Naive thymus-derived CD4-positive, alpha-beta T cell (primary cell): ENCODE measurements at regions of chr13 and their contacts with region 1.

Region 1: GRCh38 chr13:48265217-48265815 is 32.3 kb downstream of the ITM2B start:
- DNase-seq: peak in 3 of 9 donors; percentile 17 to 38 (median 27)
- ATAC-seq: peak; percentile 48
- H3K4me3 ChIP-seq: no peak overlapping the region
- H3K4me3 Mint-ChIP-seq: peak overlapping the region in 9 of 10 donors; percentile 15 to 72 (median 54)
- H3K27ac ChIP-seq: no peak overlapping the region
- H3K27ac Mint-ChIP-seq: peak overlapping the region; percentile 7 to 92 (median 86)
- H3K4me1 ChIP-seq: peaks cover 0 to 22% of the 10 kb centered on the region in 2 donors
- H3K4me1 Mint-ChIP-seq: peaks cover 22 to 73% (median 54%) of the 10 kb centered on the region in 7 donors
- H3K27me3 ChIP-seq: no peaks in the 10 kb centered on the region
- H3K27me3 Mint-ChIP-seq: no peaks in the 10 kb centered on the region

Region 2: GRCh38 chr13:47426126-47426849 is 839.0 kb before region 1 on chr13:
- CTCF ChIA-PET with region 1: no interaction called
- POLR2A ChIA-PET with region 1: no interaction called
- intact Hi-C with region 1: no loop called
- DNase-seq: no peak
- ATAC-seq: no peak
- H3K4me3 ChIP-seq: no peak overlapping the region
- H3K4me3 Mint-ChIP-seq: no peak overlapping the region
- H3K27ac ChIP-seq: no peak overlapping the region
- H3K27ac Mint-ChIP-seq: no peak overlapping the region
- H3K4me1 ChIP-seq: no peaks in the 10 kb centered on the region
- H3K4me1 Mint-ChIP-seq: no peaks in the 10 kb centered on the region
- H3K27me3 ChIP-seq: no peaks in the 10 kb centered on the region
- H3K27me3 Mint-ChIP-seq: peaks cover 0 to 4% (median 0%) of the 10 kb centered on the region in 5 donors

Region 3: DNA sequence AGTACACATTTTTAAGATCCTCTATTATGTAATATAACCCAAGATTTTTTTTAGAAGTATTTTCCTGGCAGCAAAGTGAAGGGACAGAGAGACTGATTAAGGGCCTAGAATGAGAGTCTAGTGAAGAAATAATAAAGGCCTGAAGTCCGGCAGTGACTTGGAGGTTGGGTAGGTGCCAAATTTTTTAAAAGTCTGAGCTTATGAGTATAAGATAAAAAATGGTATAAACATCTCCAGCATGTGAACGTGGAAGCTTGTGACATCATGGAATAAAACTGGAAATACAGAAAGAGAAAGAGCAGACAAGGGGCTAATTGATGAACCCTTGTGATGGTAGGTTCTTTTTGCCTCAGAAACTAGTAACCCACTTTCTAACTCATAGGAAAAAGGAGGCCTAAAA is 438.8 kb before region 1 on chr13:
- CTCF ChIA-PET with region 1: no interaction called
- POLR2A ChIA-PET with region 1: no interaction called
- intact Hi-C with region 1: no loop called
- DNase-seq: no peak
- ATAC-seq: no peak
- H3K4me3 ChIP-seq: no peak overlapping the region
- H3K4me3 Mint-ChIP-seq: no peak overlapping the region
- H3K27ac ChIP-seq: no peak overlapping the region
- H3K27ac Mint-ChIP-seq: no peak overlapping the region
- H3K4me1 ChIP-seq: no peaks in the 10 kb centered on the region
- H3K4me1 Mint-ChIP-seq: no peaks in the 10 kb centered on the region
- H3K27me3 ChIP-seq: no peaks in the 10 kb centered on the region
- H3K27me3 Mint-ChIP-seq: peaks cover 0 to 2% (median 0%) of the 10 kb centered on the region in 5 donors

Region 4: GRCh38 chr13:48251611-48252081 is 13.7 kb before region 1 on chr13:
- CTCF ChIA-PET with region 1: interaction called, 4 read pairs
- POLR2A ChIA-PET with region 1: interaction called, 4 read pairs
- intact Hi-C with region 1: loop called in 1 of 2 experiments (anchors 1 kb)
- DNase-seq: no peak
- ATAC-seq: no peak
- H3K4me3 ChIP-seq: no peak overlapping the region
- H3K4me3 Mint-ChIP-seq: peak overlapping the region in 5 of 10 donors; percentile 12 to 41 (median 38)
- H3K27ac ChIP-seq: no peak overlapping the region
- H3K27ac Mint-ChIP-seq: peak overlapping the region in 6 of 9 donors; percentile 38 to 81 (median 57)
- H3K4me1 ChIP-seq: peaks cover 2 to 49% of the 10 kb centered on the region in 2 donors
- H3K4me1 Mint-ChIP-seq: peaks cover 7 to 89% (median 74%) of the 10 kb centered on the region in 7 donors
- H3K27me3 ChIP-seq: no peaks in the 10 kb centered on the region
- H3K27me3 Mint-ChIP-seq: no peaks in the 10 kb centered on the region

Region 5: DNA sequence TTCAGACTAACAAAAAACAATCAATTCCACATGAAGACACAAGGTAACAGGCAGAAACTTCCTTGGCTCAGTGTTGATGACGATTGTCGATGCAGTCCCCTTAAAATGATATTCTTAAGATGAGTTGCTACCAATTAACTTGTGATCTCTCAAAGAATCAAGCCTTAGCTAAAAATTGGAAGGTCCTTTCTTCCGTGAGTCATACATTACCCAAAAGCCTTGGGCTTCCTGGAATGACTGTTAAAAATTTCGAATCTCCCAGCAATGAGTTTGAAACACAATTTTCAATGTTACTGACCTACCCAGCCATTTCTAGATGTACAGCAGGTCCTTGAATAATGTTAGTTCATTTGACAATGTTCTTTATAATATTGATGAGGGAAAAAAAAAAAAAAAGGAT is 10.2 kb after region 1 on chr13:
- CTCF ChIA-PET with region 1: no interaction called
- POLR2A ChIA-PET with region 1: no interaction called
- intact Hi-C with region 1: no loop called
- DNase-seq: no peak
- ATAC-seq: no peak
- H3K4me3 ChIP-seq: no peak overlapping the region
- H3K4me3 Mint-ChIP-seq: no peak overlapping the region
- H3K27ac ChIP-seq: no peak overlapping the region
- H3K27ac Mint-ChIP-seq: no peak overlapping the region
- H3K4me1 ChIP-seq: no peaks in the 10 kb centered on the region
- H3K4me1 Mint-ChIP-seq: peaks cover 0 to 5% (median 0%) of the 10 kb centered on the region in 7 donors
- H3K27me3 ChIP-seq: no peaks in the 10 kb centered on the region
- H3K27me3 Mint-ChIP-seq: peaks cover 0 to 11% (median 0%) of the 10 kb centered on the region in 5 donors

Region 6: DNA sequence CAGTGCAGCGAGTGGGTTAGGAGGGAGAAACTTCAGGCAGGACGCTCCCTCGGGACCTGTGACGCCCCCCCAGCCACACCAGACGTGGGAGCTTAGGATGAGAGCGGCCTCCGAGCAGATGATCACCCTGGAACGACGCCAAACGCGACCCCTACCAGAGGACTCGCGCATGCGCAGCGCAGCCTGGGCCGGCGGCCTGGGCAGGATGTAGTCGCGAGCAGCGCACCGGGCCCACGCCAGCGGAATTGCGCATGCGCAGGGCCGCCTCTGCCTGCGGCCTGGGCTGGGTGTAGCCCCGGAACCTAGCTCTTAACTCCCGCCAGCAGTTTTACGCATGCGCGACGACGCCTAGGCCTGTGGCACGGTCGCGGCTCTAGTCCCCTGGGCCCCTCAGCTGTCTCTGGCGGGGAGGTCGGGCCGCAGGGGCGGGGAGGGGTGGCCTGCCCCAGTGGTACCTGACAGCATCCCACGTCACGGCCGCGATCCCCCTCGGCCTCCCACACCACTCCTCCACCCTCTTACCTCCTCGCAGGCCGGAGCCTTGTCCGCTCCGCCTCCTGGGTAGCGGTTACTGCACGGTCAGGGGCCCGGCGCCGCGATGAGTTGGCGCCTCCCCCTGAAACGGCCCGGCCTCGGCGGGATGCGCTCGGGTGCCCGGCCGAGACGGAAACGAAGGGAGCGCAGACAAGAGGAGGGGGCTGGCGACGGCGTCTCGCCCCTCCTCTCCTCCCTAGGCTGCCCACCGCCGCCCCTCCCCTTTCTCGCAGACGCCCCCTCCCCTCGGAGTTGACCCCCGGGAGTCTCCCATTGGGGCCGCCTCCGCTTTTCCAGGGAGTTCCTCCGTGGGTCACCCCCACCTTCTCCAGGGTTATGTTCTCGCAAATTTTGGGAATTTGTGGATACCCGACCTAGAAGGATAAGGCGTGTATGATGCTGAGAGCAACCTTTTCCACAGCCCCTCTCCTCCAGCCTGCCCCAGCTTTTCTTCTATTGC is 267.5 kb after region 1 on chr13 and contains the start of gene RCBTB2:
- CTCF ChIA-PET with region 1: no interaction called
- POLR2A ChIA-PET with region 1: no interaction called
- intact Hi-C with region 1: no loop called
- DNase-seq: peak; percentile 97 to 100 (median 99)
- ATAC-seq: peak; percentile 92
- H3K4me3 ChIP-seq: peak within 1 kb of the TSS; percentile 80
- H3K4me3 Mint-ChIP-seq: peak within 1 kb of the TSS; percentile 83 to 99 (median 94)
- H3K27ac ChIP-seq: peak within 1 kb of the TSS; percentile 96
- H3K27ac Mint-ChIP-seq: peak within 1 kb of the TSS; percentile 98 to 100 (median 99)
- H3K4me1 ChIP-seq: peaks cover 10 to 16% of the 10 kb centered on the region in 2 donors
- H3K4me1 Mint-ChIP-seq: peaks cover 11 to 44% (median 31%) of the 10 kb centered on the region in 7 donors
- H3K27me3 ChIP-seq: no peaks in the 10 kb centered on the region
- H3K27me3 Mint-ChIP-seq: peaks cover 0 to 18% (median 0%) of the 10 kb centered on the region in 5 donors
- total RNA-seq, gene RCBTB2: 7.6 to 17.8 (median 10.1) TPM